ENCODE measurements at regions of chr11 and their contacts with region 1.

Region 1: DNA sequence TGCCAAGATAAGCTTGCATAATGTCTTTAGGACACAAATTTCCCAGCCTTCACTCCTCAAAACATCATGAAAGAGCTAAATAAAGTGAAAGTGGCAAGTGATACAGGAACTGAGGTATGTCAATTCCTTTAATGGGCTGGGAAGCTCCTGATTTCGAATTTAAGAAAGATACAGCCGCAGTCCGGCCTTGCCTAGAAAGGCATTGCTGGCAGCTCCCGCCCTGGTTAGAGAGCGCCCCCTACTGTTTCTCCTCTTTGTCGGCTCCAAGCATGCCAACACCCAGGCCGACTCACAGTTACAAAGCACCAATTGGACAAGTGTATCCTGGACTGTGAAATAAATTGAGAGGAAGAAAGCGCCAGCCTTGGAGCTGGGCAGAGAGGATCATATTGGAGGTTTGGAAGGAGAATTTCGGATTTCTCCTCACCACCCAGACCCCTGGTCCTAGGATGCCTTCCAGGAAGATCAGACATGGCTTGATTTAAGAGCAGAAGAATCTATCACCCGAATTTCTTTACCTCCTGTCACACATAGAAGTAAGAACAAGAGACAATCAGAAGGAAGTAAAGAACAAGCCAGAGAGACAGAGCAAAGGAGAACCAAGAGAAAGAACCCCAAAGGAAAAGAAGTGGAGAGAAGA is 84.0 kb downstream of the FAM76B start:
- DNase-seq: peak; percentile 61
- CTCF ChIP-seq: peak; percentile 91

Region 2: GRCh38 chr11:95545116-95545875 is 160.3 kb before region 1 on chr11:
- CTCF ChIA-PET with region 1: interaction called, 29 read pairs
- POLR2A ChIA-PET with region 1: no interaction called
- DNase-seq: no peak
- CTCF ChIP-seq: peak; percentile 17

Region 3: GRCh38 chr11:95680169-95680929 is 25.3 kb before region 1 on chr11:
- CTCF ChIA-PET with region 1: interaction called, 21 read pairs
- POLR2A ChIA-PET with region 1: no interaction called
- DNase-seq: peak; percentile 29
- CTCF ChIP-seq: no peak

Region 4: DNA sequence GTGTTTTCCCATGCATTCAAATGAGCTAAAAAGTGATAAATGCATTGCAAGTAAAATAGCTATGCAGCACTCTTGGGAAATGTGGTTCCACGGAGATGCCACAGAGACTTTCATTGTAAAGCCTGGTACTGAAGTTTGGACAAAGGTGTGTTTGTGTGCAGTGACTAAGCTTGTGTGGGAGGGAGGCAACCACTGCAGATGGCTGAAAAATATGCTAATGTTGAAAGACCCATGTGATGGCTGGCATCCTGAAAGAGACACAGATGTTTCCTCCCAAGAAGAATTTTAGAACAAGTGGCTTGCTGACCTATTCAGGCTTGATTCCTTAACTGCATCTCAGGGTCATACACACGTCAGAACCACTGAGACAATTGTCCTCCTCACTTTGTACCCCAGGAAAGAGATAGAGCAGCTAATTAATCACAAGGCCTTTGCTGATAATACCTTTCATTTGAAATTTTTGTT is 10.2 kb after region 1 on chr11:
- CTCF ChIA-PET with region 1: interaction called, 44 read pairs
- POLR2A ChIA-PET with region 1: no interaction called
- DNase-seq: peak; percentile 27
- CTCF ChIP-seq: no peak

Region 5: DNA sequence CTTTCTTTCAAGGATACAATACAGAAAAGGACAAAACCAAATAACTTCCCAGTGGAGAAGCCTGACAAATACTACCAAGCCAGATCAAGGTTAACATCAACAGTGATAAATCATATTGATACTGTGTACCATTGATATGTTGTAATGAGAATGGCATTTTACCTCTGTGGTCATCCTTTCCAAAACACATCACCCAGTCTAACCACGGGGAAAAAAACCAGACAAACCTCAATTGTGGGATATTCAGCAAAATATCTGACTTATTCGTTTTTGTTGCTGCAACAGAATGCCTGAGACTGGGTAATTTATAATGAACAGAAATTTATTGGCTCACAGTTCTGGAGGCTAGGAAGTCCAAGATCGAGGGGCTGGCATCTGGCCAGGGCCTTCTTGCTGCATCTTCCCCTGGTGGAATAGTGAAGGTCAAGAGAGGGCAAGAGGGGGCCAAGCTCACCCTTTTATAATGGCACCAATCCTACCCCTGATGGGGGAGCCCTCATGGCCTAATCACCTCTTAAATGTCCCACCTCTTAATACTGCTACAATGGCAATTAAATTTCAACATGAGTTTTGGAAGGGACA is 17.8 kb after region 1 on chr11:
- CTCF ChIA-PET with region 1: interaction called, 44 read pairs
- POLR2A ChIA-PET with region 1: no interaction called
- DNase-seq: no peak
- CTCF ChIP-seq: no peak

Region 6: GRCh38 chr11:95739108-95739938 is 33.7 kb after region 1 on chr11:
- CTCF ChIA-PET with region 1: interaction called, 11 read pairs
- POLR2A ChIA-PET with region 1: no interaction called
- DNase-seq: no peak
- CTCF ChIP-seq: peak; percentile 4